Activated CD8-positive, alpha-beta T cell treated with anti-CD3 and anti-CD28 coated beads, Interleukin-2, amount 10 ng/mL, durations not matched to agents 7 days and 5 days (primary cell): ENCODE measurements at regions of chr1 and their contacts with region 1.

Region 1: GRCh38 chr1:172398970-172399755 is 21.3 kb upstream of the C1orf105 start:
- DNase-seq: peak; percentile 31
- ATAC-seq: no peak
- H3K4me3 Mint-ChIP-seq: peak overlapping the region; percentile 31
- H3K27ac Mint-ChIP-seq: peak overlapping the region; percentile 63
- H3K4me1 Mint-ChIP-seq: peaks cover 64% of the 10 kb centered on the region
- H3K27me3 Mint-ChIP-seq: no peaks in the 10 kb centered on the region

Region 2: DNA sequence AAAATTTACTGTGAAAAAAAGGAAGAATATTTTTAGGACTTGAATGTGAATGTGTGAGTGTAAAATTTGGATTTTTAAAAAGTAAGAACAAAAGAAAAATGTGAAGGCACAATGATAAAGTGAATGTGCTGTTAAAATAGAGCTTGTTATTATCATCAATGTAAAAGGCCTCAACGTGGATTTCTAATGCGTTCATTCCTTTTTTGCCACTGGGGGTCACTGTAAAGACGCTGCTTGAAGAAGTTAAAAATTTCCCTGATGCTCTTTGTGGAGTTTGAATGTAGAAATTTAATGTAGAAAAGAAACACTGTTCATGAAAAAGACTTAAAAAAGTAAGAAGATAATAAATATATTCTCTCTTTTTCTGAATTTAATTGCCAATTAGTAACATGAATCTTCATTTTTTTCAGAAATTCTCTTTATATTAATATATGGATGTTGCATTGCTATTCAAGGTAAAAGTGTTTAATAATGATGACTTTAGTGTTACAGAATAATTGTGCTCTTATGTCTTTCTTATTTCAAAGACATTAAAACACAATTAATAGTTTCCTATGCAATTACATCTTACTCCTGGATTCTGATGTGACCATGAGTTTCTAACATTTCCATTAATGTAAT is 396.3 kb before region 1 on chr1:
- CTCF ChIA-PET with region 1: interaction called, 33 read pairs
- POLR2A ChIA-PET with region 1: no interaction called
- DNase-seq: peak; percentile 49
- ATAC-seq: no peak
- H3K4me3 Mint-ChIP-seq: no peak overlapping the region
- H3K27ac Mint-ChIP-seq: no peak overlapping the region
- H3K4me1 Mint-ChIP-seq: peaks cover 1% of the 10 kb centered on the region
- H3K27me3 Mint-ChIP-seq: no peaks in the 10 kb centered on the region

Region 3: GRCh38 chr1:172089768-172090510 is 309.2 kb before region 1 on chr1:
- CTCF ChIA-PET with region 1: interaction called, 38 read pairs
- POLR2A ChIA-PET with region 1: no interaction called
- DNase-seq: peak; percentile 71
- ATAC-seq: peak; percentile 78
- H3K4me3 Mint-ChIP-seq: no peak overlapping the region
- H3K27ac Mint-ChIP-seq: no peak overlapping the region
- H3K4me1 Mint-ChIP-seq: peaks cover 6% of the 10 kb centered on the region
- H3K27me3 Mint-ChIP-seq: peaks cover 3% of the 10 kb centered on the region

Region 4: DNA sequence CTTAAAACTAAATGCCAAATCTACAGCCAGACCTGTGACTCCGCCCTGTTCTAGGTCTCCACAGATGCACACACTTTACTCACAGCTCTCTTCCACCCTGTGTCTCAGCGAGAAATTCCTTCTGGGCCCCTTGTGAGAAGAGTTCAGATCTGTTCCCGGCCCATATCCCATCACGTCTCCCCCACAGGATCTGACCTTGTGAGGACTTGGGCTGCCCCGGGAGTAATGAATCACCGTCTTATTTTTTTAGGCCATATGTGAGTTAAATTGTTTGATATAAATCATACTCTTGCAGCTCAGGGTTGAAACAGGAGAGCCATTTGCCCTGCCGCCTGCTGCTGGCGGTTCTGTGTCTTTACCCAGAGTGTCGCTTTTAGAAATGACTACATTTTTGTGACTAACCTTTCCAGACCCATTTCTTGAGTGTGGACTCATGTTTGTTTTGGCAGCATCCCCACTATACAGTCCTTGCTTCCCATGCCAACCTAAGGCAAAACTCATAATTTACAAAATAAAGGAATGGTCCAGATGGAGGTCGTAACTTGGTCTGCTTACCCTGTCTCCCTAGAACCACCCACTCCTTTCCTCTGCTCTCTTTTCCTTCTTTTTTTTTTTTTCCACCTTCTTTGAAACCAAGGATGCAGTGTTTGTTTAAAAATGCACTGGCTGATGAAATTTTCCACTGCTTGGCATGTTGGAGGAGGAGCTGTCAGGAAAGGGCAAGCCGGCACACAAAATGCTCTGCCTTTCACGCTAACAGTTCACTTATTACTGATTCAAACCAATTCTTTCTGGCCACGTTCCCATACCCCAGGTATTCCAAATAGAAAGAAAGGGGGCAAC is 76.7 kb before region 1 on chr1:
- CTCF ChIA-PET with region 1: no interaction called
- POLR2A ChIA-PET with region 1: no interaction called
- DNase-seq: no peak
- ATAC-seq: no peak
- H3K4me3 Mint-ChIP-seq: no peak overlapping the region
- H3K27ac Mint-ChIP-seq: no peak overlapping the region
- H3K4me1 Mint-ChIP-seq: no peaks in the 10 kb centered on the region
- H3K27me3 Mint-ChIP-seq: no peaks in the 10 kb centered on the region

Region 5: GRCh38 chr1:172338295-172338735 is 60.8 kb before region 1 on chr1:
- CTCF ChIA-PET with region 1: interaction called, 10 read pairs
- POLR2A ChIA-PET with region 1: no interaction called
- DNase-seq: no peak
- ATAC-seq: peak; percentile 55
- H3K4me3 Mint-ChIP-seq: no peak overlapping the region
- H3K27ac Mint-ChIP-seq: no peak overlapping the region
- H3K4me1 Mint-ChIP-seq: peaks cover 16% of the 10 kb centered on the region
- H3K27me3 Mint-ChIP-seq: no peaks in the 10 kb centered on the region

Region 6: DNA sequence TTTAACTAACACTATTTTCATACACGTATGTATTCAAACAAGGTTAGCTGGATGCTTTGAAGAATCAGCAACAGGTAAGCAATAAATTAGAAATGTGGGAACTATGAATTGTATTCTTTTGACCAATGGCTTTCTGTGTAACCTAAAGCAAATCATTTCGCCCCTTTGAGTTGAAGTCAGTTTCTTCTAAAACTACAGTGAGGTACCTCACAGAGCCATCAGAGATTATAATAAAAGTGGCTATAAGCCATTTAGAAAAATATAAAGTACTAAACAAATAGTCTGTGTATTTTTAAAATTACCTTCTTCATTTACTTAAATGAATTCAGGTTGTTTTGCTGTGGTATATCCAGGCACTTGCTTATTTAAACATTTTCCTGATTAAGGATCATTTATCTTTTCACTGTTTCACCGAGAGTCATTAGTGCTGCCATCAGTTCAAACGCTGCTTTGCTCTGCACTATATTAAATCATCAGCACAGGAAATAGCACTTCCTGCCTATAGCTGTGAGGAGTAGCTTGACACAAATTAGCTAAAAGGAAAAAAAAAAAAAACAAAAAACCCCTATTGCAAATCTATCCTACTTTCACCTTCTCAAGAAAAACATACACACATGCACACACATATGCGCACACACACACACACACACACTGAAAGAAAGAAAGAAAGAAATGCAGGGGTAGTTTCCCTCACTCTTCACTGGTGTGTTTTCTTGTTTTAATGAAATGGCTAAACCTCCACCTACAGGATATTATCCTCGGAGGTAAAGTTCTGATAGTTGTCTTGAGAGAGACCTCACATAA is 18.5 kb before region 1 on chr1:
- CTCF ChIA-PET with region 1: interaction called, 25 read pairs
- POLR2A ChIA-PET with region 1: interaction called, 5 read pairs
- DNase-seq: peak; percentile 44
- ATAC-seq: peak; percentile 98
- H3K4me3 Mint-ChIP-seq: peak overlapping the region; percentile 65
- H3K27ac Mint-ChIP-seq: peak overlapping the region; percentile 94
- H3K4me1 Mint-ChIP-seq: peaks cover 35% of the 10 kb centered on the region
- H3K27me3 Mint-ChIP-seq: no peaks in the 10 kb centered on the region

Region 7: GRCh38 chr1:172429331-172430127 is 30.4 kb after region 1 on chr1:
- CTCF ChIA-PET with region 1: interaction called, 13 read pairs
- POLR2A ChIA-PET with region 1: no interaction called
- DNase-seq: peak; percentile 71
- ATAC-seq: peak; percentile 70
- H3K4me3 Mint-ChIP-seq: no peak overlapping the region
- H3K27ac Mint-ChIP-seq: no peak overlapping the region
- H3K4me1 Mint-ChIP-seq: peaks cover 35% of the 10 kb centered on the region
- H3K27me3 Mint-ChIP-seq: no peaks in the 10 kb centered on the region

Region 8: DNA sequence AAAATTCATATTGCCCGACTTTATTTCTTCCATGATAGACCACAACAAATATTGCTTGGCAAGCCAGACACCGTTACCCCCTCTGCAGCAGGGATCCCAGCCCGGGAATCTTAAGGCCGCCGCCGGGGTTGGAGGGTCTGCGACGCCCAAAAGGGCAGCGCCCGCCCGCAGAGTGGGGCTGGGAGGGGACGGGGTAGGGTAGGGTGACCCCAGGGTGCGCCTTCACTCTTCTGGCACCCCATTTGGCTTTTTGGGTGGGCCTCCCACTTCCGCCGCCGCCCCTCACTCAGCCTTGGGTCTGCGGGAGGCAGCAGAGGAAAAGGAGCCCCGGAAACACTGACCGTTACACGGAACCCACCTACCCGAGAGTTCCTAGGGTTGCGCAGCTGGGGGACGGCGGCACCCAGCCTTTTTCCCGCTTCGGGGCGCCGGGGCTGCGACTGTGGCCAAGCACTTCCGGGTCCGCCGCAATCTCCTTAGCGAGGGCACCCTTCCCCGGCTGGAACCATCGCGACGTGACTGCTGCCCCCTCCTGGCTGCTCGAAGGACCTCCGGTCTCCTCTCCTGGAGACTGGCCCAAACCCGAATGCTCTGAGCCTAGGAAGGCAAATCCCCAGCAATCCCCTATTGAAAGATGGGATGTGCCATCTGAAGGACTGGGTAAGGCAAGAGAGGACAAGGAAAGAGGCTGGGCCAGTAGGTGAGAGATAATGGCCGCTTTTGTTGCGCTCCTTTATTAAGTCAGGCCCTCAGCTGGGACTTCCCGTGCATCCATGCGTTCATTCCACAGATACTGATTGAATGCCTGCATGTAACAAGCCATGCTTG is 44.7 kb after region 1 on chr1 and contains the start of gene PIGC:
- CTCF ChIA-PET with region 1: interaction called, 20 read pairs
- POLR2A ChIA-PET with region 1: interaction called, 3 read pairs
- DNase-seq: peak; percentile 95
- ATAC-seq: peak; percentile 100
- H3K4me3 Mint-ChIP-seq: peak within 1 kb of the TSS; percentile 91
- H3K27ac Mint-ChIP-seq: peak within 1 kb of the TSS; percentile 91
- H3K4me1 Mint-ChIP-seq: peaks cover 32% of the 10 kb centered on the region
- H3K27me3 Mint-ChIP-seq: no peaks in the 10 kb centered on the region
- total RNA-seq, gene PIGC: 25.4 to 27.0 TPM